ENCODE measurements at regions of chr16 and their contacts with region 1.

Region 1: GRCh38 chr16:83952940-83953795 is at the start of gene OSGIN1:
- DNase-seq: peak; percentile 58
- ATAC-seq: peak; percentile 88
- H3K4me3 Mint-ChIP-seq: peak within 1 kb of the TSS; percentile 77
- H3K27ac Mint-ChIP-seq: no peak within 1 kb of the TSS
- H3K4me1 Mint-ChIP-seq: peaks cover 8% of the 10 kb centered on the region
- H3K27me3 Mint-ChIP-seq: peaks cover 20% of the 10 kb centered on the region
- CTCF ChIP-seq: no peak
- total RNA-seq, gene OSGIN1: 1.6 TPM in 2 replicates

Region 2: DNA sequence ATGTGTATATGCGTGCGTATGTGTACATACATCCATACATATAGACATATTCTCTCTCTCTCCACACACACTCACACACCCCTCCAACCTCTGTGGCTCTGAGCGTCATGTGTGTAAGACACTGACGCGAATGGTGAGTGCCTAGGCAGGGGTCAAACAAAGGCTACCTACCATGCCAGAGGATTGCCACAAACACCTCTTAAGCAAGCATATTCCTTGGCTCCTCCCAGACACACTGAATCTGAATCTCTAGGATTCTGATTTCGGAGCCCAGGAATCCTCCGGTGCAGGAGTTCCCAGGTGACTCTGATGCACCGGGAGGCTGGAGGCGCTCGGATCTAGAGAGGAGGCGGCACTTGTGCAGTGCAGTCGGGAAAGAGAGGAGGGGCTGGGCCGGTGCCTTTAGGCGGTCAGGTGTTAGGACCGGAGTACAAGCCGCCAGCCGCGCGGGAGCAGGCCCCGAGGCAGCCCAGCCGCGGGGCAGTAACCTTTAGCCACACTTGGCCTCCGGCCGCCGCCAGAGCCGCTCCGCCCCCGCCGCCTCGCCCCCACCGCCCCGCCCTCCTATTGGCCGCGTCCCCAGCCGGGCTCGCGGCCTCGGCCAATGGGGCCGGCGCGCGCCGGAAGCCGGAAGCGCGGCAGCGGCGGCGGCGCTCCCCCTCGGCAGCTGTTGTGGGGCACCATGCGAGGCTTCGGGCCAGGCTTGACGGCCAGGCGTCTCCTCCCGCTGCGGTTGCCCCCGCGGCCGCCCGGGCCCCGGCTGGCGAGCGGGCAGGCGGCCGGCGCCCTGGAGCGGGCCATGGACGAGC is 54.5 kb before region 1 on chr16 and contains the start of gene MLYCD:
- CTCF ChIA-PET with region 1: no interaction called
- POLR2A ChIA-PET with region 1: interaction called, 3 read pairs
- intact Hi-C with region 1: loop called (anchors 2 kb)
- DNase-seq: peak; percentile 73
- ATAC-seq: peak; percentile 95
- H3K4me3 Mint-ChIP-seq: peak within 1 kb of the TSS; percentile 93
- H3K27ac Mint-ChIP-seq: peak within 1 kb of the TSS; percentile 75
- H3K4me1 Mint-ChIP-seq: peaks cover 28% of the 10 kb centered on the region
- H3K27me3 Mint-ChIP-seq: peaks cover 10% of the 10 kb centered on the region
- CTCF ChIP-seq: no peak
- total RNA-seq, gene MLYCD: 8.7 and 10.8 TPM in 2 replicates

Region 3: GRCh38 chr16:83933885-83934683 is 19.1 kb before region 1 on chr16:
- CTCF ChIA-PET with region 1: no interaction called
- POLR2A ChIA-PET with region 1: no interaction called
- intact Hi-C with region 1: no loop called
- DNase-seq: no peak
- ATAC-seq: no peak
- H3K4me3 Mint-ChIP-seq: no peak overlapping the region
- H3K27ac Mint-ChIP-seq: no peak overlapping the region
- H3K4me1 Mint-ChIP-seq: no peaks in the 10 kb centered on the region
- H3K27me3 Mint-ChIP-seq: no peaks in the 10 kb centered on the region
- CTCF ChIP-seq: no peak

Region 4: GRCh38 chr16:84062734-84063640 is 109.8 kb after region 1 on chr16:
- CTCF ChIA-PET with region 1: interaction called, 3 read pairs
- POLR2A ChIA-PET with region 1: no interaction called
- intact Hi-C with region 1: loop called (anchors 1 kb)
- DNase-seq: peak; percentile 46
- ATAC-seq: peak; percentile 47
- H3K4me3 Mint-ChIP-seq: no peak overlapping the region
- H3K27ac Mint-ChIP-seq: no peak overlapping the region
- H3K4me1 Mint-ChIP-seq: no peaks in the 10 kb centered on the region
- H3K27me3 Mint-ChIP-seq: no peaks in the 10 kb centered on the region
- CTCF ChIP-seq: peak; percentile 48

Region 5: DNA sequence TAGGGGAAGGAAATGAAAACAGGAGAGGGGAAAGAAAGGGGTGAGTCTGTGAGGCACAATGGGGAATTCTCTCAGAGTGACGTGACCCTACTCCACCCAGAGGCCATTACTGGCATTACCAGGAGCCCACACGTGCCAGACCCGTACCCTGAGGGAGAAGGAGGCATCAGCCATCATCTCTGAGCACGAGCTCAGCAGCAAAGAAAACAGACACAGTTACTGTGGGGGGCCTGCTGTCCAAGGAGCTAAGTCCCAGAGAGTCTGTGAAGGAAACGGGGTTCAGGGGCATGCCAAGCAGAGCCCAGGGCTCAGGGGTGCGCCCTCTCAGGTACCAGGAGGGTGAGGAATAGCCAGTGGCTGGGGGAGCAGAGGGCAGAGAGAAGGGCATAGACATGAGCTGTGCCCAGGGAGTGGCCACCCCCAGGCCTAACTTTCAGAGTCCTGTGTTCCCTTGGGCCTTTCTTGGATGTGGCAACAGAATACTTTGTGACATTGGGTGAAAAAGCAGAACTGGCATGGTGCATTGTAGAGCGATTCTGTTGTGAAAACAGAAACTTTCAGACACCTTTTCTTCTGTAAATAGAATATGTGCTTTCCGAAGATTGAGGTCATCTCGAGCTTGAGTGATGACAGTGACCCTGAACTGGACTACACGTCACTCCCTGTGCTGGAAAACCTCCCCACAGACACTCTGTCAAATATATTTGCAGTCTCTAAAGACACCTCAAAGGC is 222.3 kb after region 1 on chr16:
- CTCF ChIA-PET with region 1: interaction called, 3 read pairs
- POLR2A ChIA-PET with region 1: no interaction called
- intact Hi-C with region 1: loop called (anchors 1 kb)
- DNase-seq: no peak
- ATAC-seq: peak; percentile 90
- H3K4me3 Mint-ChIP-seq: no peak overlapping the region
- H3K27ac Mint-ChIP-seq: no peak overlapping the region
- H3K4me1 Mint-ChIP-seq: peaks cover 5% of the 10 kb centered on the region
- H3K27me3 Mint-ChIP-seq: peaks cover 3% of the 10 kb centered on the region
- CTCF ChIP-seq: no peak

Region 6: GRCh38 chr16:84308120-84308519 is 355.0 kb after region 1 on chr16:
- CTCF ChIA-PET with region 1: no interaction called
- POLR2A ChIA-PET with region 1: no interaction called
- intact Hi-C with region 1: loop called (anchors 5 kb)
- DNase-seq: no peak
- ATAC-seq: no peak
- H3K4me3 Mint-ChIP-seq: no peak overlapping the region
- H3K27ac Mint-ChIP-seq: no peak overlapping the region
- H3K4me1 Mint-ChIP-seq: no peaks in the 10 kb centered on the region
- H3K27me3 Mint-ChIP-seq: peaks cover 23% of the 10 kb centered on the region
- CTCF ChIP-seq: no peak

Region 7: DNA sequence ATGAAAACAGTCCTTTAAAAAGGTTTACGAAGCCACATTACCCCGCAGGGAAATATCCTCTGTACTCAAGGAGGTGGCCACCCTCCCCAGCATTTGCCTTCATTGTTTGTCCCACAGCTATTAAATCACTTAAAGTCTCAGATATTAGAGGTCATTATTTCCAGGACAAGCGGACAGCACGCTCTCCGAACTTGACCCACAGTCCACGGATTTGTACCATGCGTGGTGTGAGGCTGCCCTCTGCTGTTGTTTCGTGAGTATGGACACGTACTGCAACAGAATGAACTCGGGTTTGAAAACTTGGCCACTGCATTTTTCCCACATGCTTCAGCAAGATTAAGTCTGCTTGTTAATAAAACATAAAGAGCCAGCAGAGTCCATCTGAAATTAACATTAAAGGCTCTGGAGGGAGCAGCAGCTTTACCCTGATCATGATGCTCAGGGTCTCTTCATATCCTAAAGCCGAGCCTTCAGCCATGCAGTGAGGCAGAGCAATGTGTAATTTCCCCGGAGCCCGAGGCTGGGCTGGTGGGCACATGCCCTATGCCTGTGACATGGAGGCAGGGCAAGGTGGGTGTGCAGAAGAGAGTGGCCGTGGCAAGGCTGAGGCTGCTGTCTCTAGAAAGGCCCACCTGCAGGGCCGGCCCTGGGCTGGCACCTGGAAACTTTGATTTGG is 531.5 kb after region 1 on chr16:
- CTCF ChIA-PET with region 1: no interaction called
- POLR2A ChIA-PET with region 1: no interaction called
- intact Hi-C with region 1: loop called (anchors 2 kb)
- DNase-seq: no peak
- ATAC-seq: no peak
- H3K4me3 Mint-ChIP-seq: no peak overlapping the region
- H3K27ac Mint-ChIP-seq: no peak overlapping the region
- H3K4me1 Mint-ChIP-seq: no peaks in the 10 kb centered on the region
- H3K27me3 Mint-ChIP-seq: no peaks in the 10 kb centered on the region
- CTCF ChIP-seq: no peak